Astrocyte of the cerebellum (primary cell): ENCODE measurements at regions of chr17 and their contacts with region 1.

Region 1: DNA sequence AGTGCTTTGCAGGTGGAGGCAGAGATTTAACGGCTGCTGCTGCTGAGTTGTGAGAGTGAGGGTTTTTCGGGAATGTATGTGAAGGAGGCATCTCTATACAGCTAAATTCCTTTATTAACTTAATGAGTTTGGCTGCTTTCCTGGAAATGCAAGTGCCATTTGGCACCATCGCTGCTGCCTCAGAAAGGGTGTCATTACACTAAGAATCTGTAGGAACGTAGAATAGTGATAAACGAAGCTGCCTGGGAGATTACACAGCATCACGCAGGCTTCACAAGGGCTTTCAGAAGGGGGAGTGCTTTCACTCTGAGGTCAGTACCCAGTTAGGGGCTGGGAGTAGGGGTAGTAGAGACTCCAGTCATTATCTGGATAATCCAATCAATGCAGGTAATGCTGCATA is 14.1 kb upstream of the NLRP1 start:
- DNase-seq: no peak
- H3K4me3 ChIP-seq: no peak overlapping the region
- CTCF ChIP-seq: no peak

Region 2: DNA sequence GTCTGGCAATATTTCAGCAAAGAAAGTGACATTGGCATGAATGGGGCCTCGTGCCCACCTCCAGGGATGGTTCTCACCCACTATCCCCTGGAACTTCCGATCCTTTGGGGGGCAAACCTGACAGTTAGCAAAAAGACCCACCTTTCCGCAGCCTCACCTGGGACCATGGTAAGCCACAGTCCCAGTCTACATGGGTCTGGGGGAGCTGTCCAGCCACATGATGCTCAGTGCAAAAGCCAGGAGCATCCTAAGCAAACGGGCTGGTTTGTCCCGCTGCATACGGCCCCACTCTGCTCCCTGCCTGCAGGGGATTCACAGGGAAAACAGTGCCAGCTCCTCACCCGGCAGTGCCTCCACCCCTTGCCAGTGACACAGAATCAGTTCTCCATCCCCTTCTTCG is 817.2 kb after region 1 on chr17:
- in situ Hi-C with region 1: loop called (anchors 5 kb)
- DNase-seq: no peak
- H3K4me3 ChIP-seq: no peak overlapping the region
- CTCF ChIP-seq: no peak